ENCODE measurements at regions of chr6 and their contacts with region 1.

Region 1: DNA sequence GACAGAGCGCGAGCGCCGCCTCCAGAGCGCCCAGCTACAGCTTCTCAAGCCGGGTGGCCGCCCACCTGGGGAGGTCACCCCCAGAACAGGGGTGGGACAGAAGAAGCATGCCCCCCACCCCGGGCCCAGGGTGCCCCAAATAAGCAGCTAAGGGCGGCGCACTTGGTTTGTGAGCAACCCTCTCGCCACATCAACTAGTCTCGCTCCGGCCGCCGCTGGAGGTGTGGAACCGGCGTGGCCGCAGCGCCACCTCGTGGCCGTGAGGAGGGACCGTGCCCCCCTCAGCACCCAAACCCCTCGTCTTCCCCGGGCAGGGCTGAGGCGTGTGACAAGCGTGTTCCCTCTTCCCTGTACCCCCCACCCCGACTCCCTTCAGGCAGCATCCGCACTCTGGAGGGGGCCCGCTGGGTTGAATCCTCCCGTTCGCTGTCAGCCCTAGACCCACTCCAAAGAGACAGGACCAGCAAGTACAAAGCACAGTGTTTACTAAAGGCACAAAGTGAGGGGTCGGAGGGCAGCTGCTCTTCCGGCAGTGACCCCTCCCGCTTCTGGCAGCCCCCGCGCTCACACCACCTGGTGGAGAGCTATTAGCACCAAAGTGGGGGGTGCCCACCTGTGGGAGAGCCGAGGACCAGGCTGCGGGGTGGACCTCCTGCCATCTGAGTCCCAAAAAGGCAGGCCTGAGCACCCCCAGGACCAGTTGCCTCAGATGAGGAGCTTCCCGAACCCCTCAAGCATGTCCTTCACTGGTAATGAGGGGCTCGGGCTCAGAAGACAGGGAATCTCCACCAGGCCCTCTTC is 45.4 kb downstream of the MDFI start:
- DNase-seq: peak; percentile 70
- H3K4me3 Mint-ChIP-seq: peak overlapping the region; percentile 81
- H3K27ac Mint-ChIP-seq: peak overlapping the region; percentile 85
- H3K4me1 Mint-ChIP-seq: peaks cover 5% of the 10 kb centered on the region
- H3K27me3 Mint-ChIP-seq: no peaks in the 10 kb centered on the region

Region 2: GRCh38 chr6:41602864-41603608 is 80.7 kb before region 1 on chr6:
- intact Hi-C with region 1: loop called (anchors 1 kb)
- DNase-seq: peak; percentile 66
- H3K4me3 Mint-ChIP-seq: no peak overlapping the region
- H3K27ac Mint-ChIP-seq: no peak overlapping the region
- H3K4me1 Mint-ChIP-seq: peaks cover 4% of the 10 kb centered on the region
- H3K27me3 Mint-ChIP-seq: peaks cover 4% of the 10 kb centered on the region

Region 3: GRCh38 chr6:41705996-41706835 is 22.5 kb after region 1 on chr6:
- intact Hi-C with region 1: no loop called
- DNase-seq: peak; percentile 43
- H3K4me3 Mint-ChIP-seq: no peak overlapping the region
- H3K27ac Mint-ChIP-seq: peak overlapping the region; percentile 43
- H3K4me1 Mint-ChIP-seq: peaks cover 23% of the 10 kb centered on the region
- H3K27me3 Mint-ChIP-seq: no peaks in the 10 kb centered on the region

Measured in activated T-helper 2 cell treated with anti-CD3 and anti-CD28 coated beads, Interferon-gamma antibody, Interleukin-2, Interleukin-4, amounts not matched to agents 10 μg/mL and 5 μg/mL and 100 μg/mL, durations not matched to agents 14 hours and 24 hours and 36 hours (primary cell).